ENCODE measurements at regions of chr17 and their contacts with region 1.

Region 1: DNA sequence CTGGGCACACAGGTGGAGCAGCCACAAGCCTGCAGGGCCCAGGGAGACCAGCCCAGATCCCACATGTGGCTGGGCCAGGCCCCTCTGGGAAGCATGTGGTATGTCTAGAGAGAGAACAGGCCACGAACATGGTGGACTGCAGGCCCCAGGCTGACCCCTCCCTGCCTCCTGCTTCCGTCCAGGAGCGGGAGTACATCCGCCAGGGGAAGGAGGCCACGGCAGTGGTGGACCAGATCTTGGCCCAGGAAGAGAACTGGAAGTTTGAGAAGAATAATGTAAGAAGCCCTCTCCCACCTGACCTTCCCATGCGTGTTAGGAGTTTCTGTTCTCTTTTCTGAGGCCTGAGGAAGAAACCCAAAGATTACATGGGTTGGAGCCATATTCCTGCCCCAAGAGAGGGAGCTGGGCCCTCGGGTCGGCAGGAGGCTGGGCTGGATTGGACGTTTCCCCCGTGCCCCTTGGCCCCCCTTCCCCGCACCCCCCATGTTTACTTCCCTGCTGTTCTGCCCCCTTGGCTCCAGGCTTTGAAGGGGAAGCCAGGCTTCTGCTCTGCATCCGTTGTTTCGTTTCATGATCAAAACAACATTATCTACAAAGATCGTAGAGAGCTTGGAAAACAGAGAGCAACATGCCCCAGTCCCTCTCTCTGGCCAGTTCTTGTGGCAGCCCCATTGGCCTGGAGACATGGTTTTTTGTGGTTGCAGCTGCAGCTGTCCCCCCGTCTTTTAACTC is 5.7 kb upstream of the TCAP start:
- H3K4me3 Mint-ChIP-seq: no peak overlapping the region
- H3K27ac Mint-ChIP-seq: peak overlapping the region; percentile 66
- H3K4me1 Mint-ChIP-seq: peaks cover 71% of the 10 kb centered on the region
- H3K27me3 Mint-ChIP-seq: peaks cover 7% of the 10 kb centered on the region

Region 2: GRCh38 chr17:39643271-39643670 is 16.2 kb before region 1 on chr17:
- intact Hi-C with region 1: loop called (anchors 2 kb)
- H3K4me3 Mint-ChIP-seq: peak overlapping the region; percentile 60
- H3K27ac Mint-ChIP-seq: peak overlapping the region; percentile 37
- H3K4me1 Mint-ChIP-seq: peaks cover 100% of the 10 kb centered on the region
- H3K27me3 Mint-ChIP-seq: no peaks in the 10 kb centered on the region